Mucosa of descending colon (tissue), 3 donors: ENCODE measurements at regions of chr10 and their contacts with region 1.

Region 1: GRCh38 chr10:80504158-80504811 is 33.4 kb upstream of the SH2D4B start:
- DNase-seq: peak in 2 of 3 donors; percentile 58 to 59
- ATAC-seq: peak; percentile 78
- H3K4me3 ChIP-seq: no peak overlapping the region
- H3K4me1 ChIP-seq: peaks cover 54% of the 10 kb centered on the region
- CTCF ChIP-seq: no peak

Region 2: DNA sequence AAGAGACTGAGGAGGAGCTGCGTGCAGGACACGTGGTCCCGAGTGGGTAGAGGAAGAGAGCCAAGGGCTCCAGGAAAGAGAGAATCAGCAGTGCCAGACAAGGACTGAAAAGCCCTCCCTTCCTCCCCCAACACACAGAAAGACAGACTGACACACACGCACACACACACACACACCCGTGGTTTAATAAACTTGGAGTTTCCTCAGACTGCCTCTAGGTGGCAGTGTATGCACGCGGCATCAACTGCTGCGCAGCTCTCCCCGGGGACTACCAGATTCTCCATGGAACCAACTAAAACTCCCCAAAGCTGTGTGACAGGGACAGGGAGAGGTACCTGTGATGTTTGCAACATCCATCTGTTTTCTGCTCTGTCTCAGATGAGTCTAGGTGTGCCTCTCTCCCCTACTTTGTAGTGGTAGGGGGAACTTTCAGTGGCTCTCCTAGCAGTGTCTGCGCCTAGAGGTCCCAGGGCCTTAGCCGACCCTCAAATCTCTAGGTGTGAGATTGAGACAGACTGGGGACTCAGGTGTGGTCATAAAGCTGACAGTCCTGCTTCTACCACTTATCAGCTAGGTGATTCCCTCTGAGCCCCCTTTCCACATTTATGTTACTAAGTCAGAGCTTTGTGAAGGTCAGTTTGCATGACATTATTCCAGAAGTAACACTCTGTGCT is 59.5 kb before region 1 on chr10:
- intact Hi-C with region 1: loop called (anchors 2 to 5 kb)
- DNase-seq: peak in 2 of 3 donors; percentile 68 to 86
- ATAC-seq: peak; percentile 94
- H3K4me3 ChIP-seq: no peak overlapping the region
- H3K4me1 ChIP-seq: no peaks in the 10 kb centered on the region
- CTCF ChIP-seq: peak; percentile 46